ENCODE measurements at regions of chr12 and their contacts with region 1.

Region 1: GRCh38 chr12:54368709-54369583 is 4.7 kb upstream of the GPR84 start:
- DNase-seq: peak; percentile 91 to 93 (median 92)
- ATAC-seq: peak; percentile 86
- H3K4me3 ChIP-seq: no peak overlapping the region
- H3K27ac ChIP-seq: no peak overlapping the region
- H3K4me1 ChIP-seq: peaks cover 33% of the 10 kb centered on the region
- H3K27me3 ChIP-seq: no peaks in the 10 kb centered on the region
- CTCF ChIP-seq: peak; percentile 67 to 89 (median 83)
- POLR2A ChIP-seq: no peak

Region 2: DNA sequence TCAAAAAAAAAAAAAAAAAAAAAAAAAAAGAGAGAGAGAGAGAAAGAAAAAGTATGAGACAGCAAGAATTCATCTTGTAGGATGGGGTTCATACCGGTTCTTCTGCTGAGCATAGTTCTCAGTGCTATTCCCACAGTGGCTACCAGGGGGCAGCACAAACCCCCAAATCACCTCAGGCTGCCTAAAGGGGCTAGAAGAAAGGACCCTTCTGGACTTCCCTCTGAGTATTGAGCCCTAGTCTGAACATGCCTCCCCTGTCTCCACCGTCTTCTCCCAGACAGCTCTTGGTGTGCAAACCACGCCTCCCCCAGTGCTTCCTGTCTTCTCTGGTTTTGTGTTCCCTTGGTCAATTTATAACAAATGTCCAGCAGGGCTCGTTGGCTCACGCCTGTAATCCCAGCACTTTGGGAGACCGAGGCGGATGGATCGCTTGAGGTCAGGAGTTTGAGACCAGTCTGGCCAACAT is 148.8 kb before region 1 on chr12:
- intact Hi-C with region 1: loop called (anchors 10 kb)
- DNase-seq: peak; percentile 63 to 80 (median 68)
- ATAC-seq: peak; percentile 72
- H3K4me3 ChIP-seq: no peak overlapping the region
- H3K27ac ChIP-seq: no peak overlapping the region
- H3K4me1 ChIP-seq: peaks cover 29% of the 10 kb centered on the region
- H3K27me3 ChIP-seq: peaks cover 4 to 12% of the 10 kb centered on the region in 2 donors
- CTCF ChIP-seq: peak; percentile 63 to 95 (median 74)
- POLR2A ChIP-seq: no peak

Region 3: GRCh38 chr12:54259194-54260011 is 109.5 kb before region 1 on chr12:
- intact Hi-C with region 1: loop called (anchors 10 kb)
- DNase-seq: peak; percentile 78 to 90 (median 88)
- ATAC-seq: peak; percentile 94
- H3K4me3 ChIP-seq: no peak overlapping the region
- H3K27ac ChIP-seq: peak overlapping the region; percentile 63 to 91 (median 80)
- H3K4me1 ChIP-seq: peaks cover 34% of the 10 kb centered on the region
- H3K27me3 ChIP-seq: no peaks in the 10 kb centered on the region
- CTCF ChIP-seq: no peak
- POLR2A ChIP-seq: peak in 2 of 3 donors; percentile 44 to 52

Region 4: DNA sequence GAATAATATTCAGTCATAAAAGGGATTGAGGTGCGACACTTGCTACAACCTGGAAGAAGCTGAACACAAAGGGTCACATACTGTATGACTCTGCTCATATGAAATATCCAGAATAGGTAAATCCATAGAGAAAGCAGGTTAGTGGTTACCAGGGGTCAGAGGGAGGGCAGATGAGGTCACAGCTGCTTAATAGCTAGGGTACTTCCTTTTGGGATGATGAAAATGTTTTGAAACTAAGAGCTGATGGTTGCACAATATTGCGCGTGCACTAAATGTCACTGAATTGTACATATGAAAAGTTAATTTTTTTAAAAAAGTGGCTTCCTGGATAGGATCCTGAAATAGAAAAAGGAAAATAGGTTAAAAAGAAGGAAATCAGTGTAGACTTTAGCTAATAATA is 674.6 kb after region 1 on chr12:
- intact Hi-C with region 1: no loop called
- DNase-seq: peak in 1 of 4 donors; percentile 49
- ATAC-seq: no peak
- H3K4me3 ChIP-seq: no peak overlapping the region
- H3K27ac ChIP-seq: no peak overlapping the region
- H3K4me1 ChIP-seq: no peaks in the 10 kb centered on the region
- H3K27me3 ChIP-seq: no peaks in the 10 kb centered on the region
- CTCF ChIP-seq: no peak
- POLR2A ChIP-seq: no peak